ENCODE measurements at regions of chr9 and their contacts with region 1.

Region 1: GRCh38 chr9:78035383-78035993 is 3.9 kb upstream of the GNAQ start:
- DNase-seq: peak in 6 of 10 donors; percentile 33 to 67 (median 57)
- H3K4me3 ChIP-seq: peak overlapping the region in 32 of 59 donors; percentile 1 to 51 (median 30)
- H3K27ac ChIP-seq: peak overlapping the region in 56 of 59 donors; percentile 12 to 90 (median 70)
- H3K27me3 ChIP-seq: no peaks in the 10 kb centered on the region
- CTCF ChIP-seq: peak; percentile 83 to 98 (median 93)

Region 2: GRCh38 chr9:77433675-77434445 is 601.6 kb before region 1 on chr9:
- intact Hi-C with region 1: loop called (anchors 2 to 5 kb)
- DNase-seq: peak; percentile 37 to 85 (median 80)
- H3K4me3 ChIP-seq: peak overlapping the region in 30 of 59 donors; percentile 4 to 44 (median 24)
- H3K27ac ChIP-seq: peak overlapping the region in 9 of 59 donors; percentile 5 to 63 (median 26)
- H3K27me3 ChIP-seq: no peaks in the 10 kb centered on the region
- CTCF ChIP-seq: peak in 55 of 56 donors; percentile 72 to 99 (median 96)

Region 3: DNA sequence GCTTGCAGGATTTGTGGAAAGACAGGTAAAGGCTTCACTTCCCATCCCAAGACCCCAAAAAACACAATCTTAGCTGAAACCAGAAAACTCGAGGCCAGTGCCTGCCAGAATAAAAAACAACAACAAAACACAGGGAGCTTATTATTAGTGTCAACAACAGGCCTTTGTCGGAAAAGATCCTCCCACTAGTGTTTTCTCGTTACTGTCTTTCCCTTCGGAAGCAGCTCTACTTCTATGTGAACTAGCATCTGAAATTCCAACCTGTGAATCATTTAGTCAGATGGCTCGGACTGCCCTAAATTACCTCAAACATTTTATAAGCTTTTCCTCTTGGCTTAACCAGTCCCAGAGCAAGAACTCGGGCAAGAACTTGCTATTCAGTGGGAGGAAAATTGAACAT is 265.1 kb before region 1 on chr9:
- intact Hi-C with region 1: loop called in 1 of 2 experiments (anchors 5 kb)
- DNase-seq: no peak
- H3K4me3 ChIP-seq: peak overlapping the region in 36 of 59 donors; percentile 3 to 51 (median 32)
- H3K27ac ChIP-seq: peak overlapping the region; percentile 66 to 98 (median 94)
- H3K27me3 ChIP-seq: no peaks in the 10 kb centered on the region
- CTCF ChIP-seq: peak in 4 of 56 donors; percentile 5 to 11 (median 7)

Region 4: DNA sequence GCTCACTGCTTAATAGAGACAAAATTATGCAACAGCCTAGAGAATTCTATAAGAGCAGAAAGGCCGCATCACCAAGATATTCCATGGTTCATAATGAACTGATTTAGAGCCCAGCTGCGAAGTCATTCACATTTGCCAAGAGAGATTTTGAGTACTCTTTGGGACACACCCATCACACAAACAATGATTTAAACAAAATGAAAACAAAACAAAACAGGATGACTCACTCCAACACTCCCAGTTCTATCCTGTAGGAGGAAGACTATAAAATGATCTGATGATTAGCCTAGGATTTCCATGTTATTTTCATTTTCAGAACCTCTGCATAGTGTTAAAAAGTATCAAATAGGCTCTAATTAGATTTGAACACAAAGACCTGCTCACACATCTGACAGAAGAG is 241.6 kb before region 1 on chr9:
- intact Hi-C with region 1: no loop called
- DNase-seq: peak in 1 of 10 donors; percentile 26
- H3K4me3 ChIP-seq: peak overlapping the region in 27 of 59 donors; percentile 4 to 49 (median 14)
- H3K27ac ChIP-seq: peak overlapping the region; percentile 48 to 96 (median 88)
- H3K27me3 ChIP-seq: no peaks in the 10 kb centered on the region
- CTCF ChIP-seq: peak in 39 of 56 donors; percentile 11 to 59 (median 36)

Region 5: DNA sequence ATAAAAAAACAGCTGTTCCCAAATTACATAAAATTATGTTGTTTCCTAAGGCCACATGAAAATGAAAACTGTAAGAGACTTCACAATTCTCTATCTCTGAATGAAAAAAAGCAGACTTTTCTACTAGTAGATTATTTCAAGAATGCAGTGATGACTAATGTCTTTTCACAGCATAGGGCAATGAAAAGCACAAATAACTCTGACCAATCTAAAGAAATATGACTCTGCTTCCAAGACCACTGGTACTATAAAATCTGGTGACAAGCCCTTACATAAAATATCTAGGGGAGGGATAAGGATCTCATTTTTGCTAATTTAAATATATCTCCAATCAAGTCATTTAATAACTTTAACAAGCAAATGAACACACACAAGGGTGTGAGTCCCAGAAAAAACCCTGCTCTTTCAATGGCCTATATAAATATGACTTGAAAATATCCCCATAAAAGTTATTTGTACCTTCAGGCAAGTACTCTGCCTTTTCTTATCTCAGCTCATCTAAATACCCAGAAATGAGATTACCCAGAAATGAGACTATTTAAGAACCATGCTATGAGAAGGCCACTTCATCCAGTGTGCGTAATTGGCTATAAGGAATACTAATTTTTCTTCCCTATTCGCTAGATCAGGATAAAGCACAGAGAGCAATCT is 109.1 kb before region 1 on chr9:
- intact Hi-C with region 1: no loop called
- DNase-seq: no peak
- H3K4me3 ChIP-seq: no peak overlapping the region
- H3K27ac ChIP-seq: peak overlapping the region in 4 of 59 donors; percentile 8 to 30 (median 16)
- H3K27me3 ChIP-seq: no peaks in the 10 kb centered on the region
- CTCF ChIP-seq: no peak

Region 6: GRCh38 chr9:77977210-77977611 is 58.3 kb before region 1 on chr9:
- intact Hi-C with region 1: loop called (anchors 2 kb)
- DNase-seq: peak in 9 of 10 donors; percentile 46 to 75 (median 66)
- H3K4me3 ChIP-seq: peak overlapping the region in 9 of 59 donors; percentile 1 to 38 (median 23)
- H3K27ac ChIP-seq: peak overlapping the region in 58 of 59 donors; percentile 26 to 89 (median 78)
- H3K27me3 ChIP-seq: no peaks in the 10 kb centered on the region
- CTCF ChIP-seq: peak; percentile 34 to 83 (median 68)

Region 7: GRCh38 chr9:78213712-78214111 is 178.2 kb after region 1 on chr9:
- intact Hi-C with region 1: loop called in 1 of 2 experiments (anchors 5 kb)
- DNase-seq: no peak
- H3K4me3 ChIP-seq: peak overlapping the region in 8 of 59 donors; percentile 12 to 41 (median 17)
- H3K27ac ChIP-seq: peak overlapping the region in 56 of 59 donors; percentile 6 to 86 (median 70)
- H3K27me3 ChIP-seq: no peaks in the 10 kb centered on the region
- CTCF ChIP-seq: peak in 53 of 56 donors; percentile 29 to 78 (median 58)

Measured in dorsolateral prefrontal cortex (tissue), 120 donors.